Common myeloid progenitor, CD34-positive (primary cell): ENCODE measurements at regions of chr18 and their contacts with region 1.

Region 1: DNA sequence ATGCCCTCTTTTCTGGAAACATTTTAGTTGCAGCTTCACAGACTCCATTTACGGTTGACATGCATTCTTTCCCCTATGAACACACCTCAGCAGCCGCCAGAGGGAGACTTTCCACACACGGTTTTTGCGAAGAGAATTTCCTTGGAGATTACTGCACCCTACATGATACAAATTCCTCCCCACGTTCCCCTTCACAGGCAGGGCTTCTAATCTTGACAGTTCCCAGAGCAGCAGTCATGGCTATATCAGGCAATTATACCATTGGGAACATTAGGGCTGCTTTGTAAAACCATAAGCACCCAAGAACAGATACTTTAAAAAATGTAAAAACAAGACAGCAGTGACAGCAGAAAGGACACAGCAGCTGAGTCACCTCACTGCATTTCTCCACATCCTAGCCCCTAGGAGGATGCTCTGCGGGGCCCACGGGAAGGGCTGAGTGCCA is 253.8 kb downstream of the TGIF1 start:
- DNase-seq: peak; percentile 60 to 74 (median 67)
- H3K4me3 ChIP-seq: peak overlapping the region in 1 of 7 experiments; percentile 25
- H3K27ac ChIP-seq: no peak overlapping the region
- H3K4me1 ChIP-seq: peaks cover 0 to 19% (median 15%) of the 10 kb centered on the region in 4 experiments
- H3K27me3 ChIP-seq: no peaks in the 10 kb centered on the region

Region 2: GRCh38 chr18:3688699-3689098 is 15.1 kb before region 1 on chr18:
- CTCF ChIA-PET with region 1: interaction called, 18 read pairs
- POLR2A ChIA-PET with region 1: interaction called, 3 read pairs
- DNase-seq: no peak
- H3K4me3 ChIP-seq: no peak overlapping the region
- H3K27ac ChIP-seq: no peak overlapping the region
- H3K4me1 ChIP-seq: peaks cover 0 to 5% (median 1%) of the 10 kb centered on the region in 4 experiments
- H3K27me3 ChIP-seq: no peaks in the 10 kb centered on the region

Region 3: GRCh38 chr18:3722320-3723000 is 18.7 kb after region 1 on chr18:
- CTCF ChIA-PET with region 1: interaction called, 21 read pairs
- POLR2A ChIA-PET with region 1: no interaction called
- DNase-seq: peak in 2 of 3 donors; percentile 68 to 78
- H3K4me3 ChIP-seq: no peak overlapping the region
- H3K27ac ChIP-seq: no peak overlapping the region
- H3K4me1 ChIP-seq: peaks cover 21 to 80% (median 37%) of the 10 kb centered on the region in 4 experiments
- H3K27me3 ChIP-seq: no peaks in the 10 kb centered on the region

Region 4: GRCh38 chr18:3869848-3870247 is 166.1 kb after region 1 on chr18:
- CTCF ChIA-PET with region 1: interaction called, 49 read pairs
- POLR2A ChIA-PET with region 1: no interaction called
- DNase-seq: peak; percentile 65 to 77 (median 75)
- H3K4me3 ChIP-seq: no peak overlapping the region
- H3K27ac ChIP-seq: no peak overlapping the region
- H3K4me1 ChIP-seq: peaks cover 0 to 4% (median 1%) of the 10 kb centered on the region in 4 experiments
- H3K27me3 ChIP-seq: peaks cover 0 to 2% (median 0%) of the 10 kb centered on the region in 5 experiments